ENCODE measurements at regions of chr13 and their contacts with region 1.

Region 1: DNA sequence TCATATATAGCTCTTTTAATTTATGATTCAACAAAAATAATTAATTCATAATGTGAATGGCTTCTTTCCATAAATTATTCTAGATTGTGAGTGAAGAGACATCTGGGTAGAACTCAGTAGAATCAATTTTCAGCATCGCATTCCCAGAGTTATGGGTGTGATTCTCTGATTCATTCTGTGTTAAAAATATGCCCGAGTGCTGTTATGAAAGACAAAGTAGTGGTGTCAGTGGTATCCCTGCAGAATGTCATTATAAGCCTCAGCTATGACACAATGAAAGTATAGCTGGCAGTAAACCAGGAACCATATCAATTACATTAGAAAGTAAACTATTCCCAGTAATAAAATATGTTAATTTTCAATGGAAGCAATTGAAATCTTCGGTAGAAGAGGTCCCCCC is 480.5 kb upstream of the SLITRK1 start:
- DNase-seq: no peak
- H3K4me3 ChIP-seq: no peak overlapping the region
- H3K27ac ChIP-seq: no peak overlapping the region
- H3K4me1 ChIP-seq: no peaks in the 10 kb centered on the region
- H3K27me3 ChIP-seq: no peaks in the 10 kb centered on the region
- CTCF ChIP-seq: no peak
- POLR2A ChIP-seq: no peak

Region 2: DNA sequence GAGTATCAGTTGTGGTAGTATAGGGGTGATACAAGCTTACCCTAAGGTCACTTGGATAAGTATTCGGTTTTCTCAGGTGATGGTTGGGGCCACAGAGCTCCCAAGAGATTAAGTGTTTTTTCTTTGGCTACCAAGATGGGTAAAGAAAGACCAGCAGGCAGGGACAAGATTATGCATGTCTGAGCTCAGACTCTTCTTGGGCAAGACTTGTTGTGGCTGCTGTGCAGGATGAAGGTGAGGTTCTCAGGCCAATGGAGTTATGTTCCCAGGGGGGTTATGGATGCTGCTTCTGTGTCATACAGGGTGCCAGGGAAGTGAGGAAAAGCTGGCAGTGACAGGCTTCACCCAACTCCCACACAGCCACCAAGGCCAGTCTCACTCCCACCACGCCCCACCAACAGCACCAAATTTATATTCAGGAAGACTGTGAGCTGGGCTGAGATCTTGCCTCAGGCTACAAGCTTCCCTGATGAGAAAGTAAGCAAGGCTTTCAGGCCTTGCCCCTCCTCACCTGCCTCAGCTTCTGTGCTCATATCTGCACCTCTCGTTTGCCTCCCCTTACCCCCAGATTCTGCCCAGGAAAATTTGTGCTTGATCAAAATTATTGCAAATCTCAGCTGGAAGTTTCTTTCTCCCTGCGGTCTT is 31.3 kb after region 1 on chr13:
- intact Hi-C with region 1: loop called (anchors 2 kb)
- DNase-seq: no peak
- H3K4me3 ChIP-seq: no peak overlapping the region
- H3K27ac ChIP-seq: no peak overlapping the region
- H3K4me1 ChIP-seq: no peaks in the 10 kb centered on the region
- H3K27me3 ChIP-seq: no peaks in the 10 kb centered on the region
- CTCF ChIP-seq: no peak
- POLR2A ChIP-seq: no peak

Region 3: GRCh38 chr13:84417426-84417825 is 54.6 kb after region 1 on chr13:
- intact Hi-C with region 1: no loop called
- DNase-seq: no peak
- H3K4me3 ChIP-seq: no peak overlapping the region
- H3K27ac ChIP-seq: no peak overlapping the region
- H3K4me1 ChIP-seq: no peaks in the 10 kb centered on the region
- H3K27me3 ChIP-seq: no peaks in the 10 kb centered on the region
- CTCF ChIP-seq: no peak
- POLR2A ChIP-seq: no peak